AG04449 (cell line): ENCODE measurements at regions of chr2 and their contacts with region 1.

Region 1: DNA sequence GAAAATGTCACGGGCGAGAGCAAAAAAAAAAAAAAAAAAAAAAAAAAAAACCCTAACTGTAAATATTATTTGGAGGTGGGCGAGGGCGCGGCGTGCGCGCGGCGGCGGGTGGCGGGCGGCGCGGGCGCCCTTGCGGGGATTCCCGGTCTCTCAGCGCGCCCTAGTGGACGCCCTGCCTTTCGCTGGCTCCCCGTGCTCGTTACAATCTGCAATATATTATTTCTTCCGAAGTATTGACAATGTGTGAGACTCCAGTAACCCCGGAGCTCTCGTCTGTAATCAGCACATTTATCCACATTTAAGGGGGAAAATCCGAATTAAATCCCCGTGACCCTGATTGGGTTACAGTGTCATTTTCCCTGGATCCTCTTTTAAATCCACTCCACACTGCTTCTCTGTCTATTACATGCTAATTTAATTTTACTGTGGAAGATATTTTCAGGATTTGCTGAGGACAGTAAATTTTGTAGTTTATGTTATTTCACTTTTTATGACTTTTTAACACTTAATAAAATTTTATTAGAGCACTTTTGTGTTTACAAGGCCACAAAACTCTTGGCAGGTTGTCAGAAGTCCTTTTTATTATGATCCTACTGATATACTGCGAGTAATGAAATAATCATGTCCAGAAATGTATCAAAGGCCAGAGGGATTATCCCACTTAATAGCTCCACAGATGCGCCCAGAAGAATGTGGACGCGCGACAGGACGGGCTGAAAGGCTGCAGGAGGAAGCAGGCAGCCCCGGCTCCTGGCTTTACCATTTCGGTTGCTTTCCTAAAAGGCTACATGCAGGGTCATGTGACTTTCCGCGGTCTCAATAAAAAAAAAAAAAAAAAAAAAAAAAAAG is 369.1 kb downstream of the MTX2 start:
- DNase-seq: no peak
- H3K4me3 ChIP-seq: peak overlapping the region; percentile 66
- CTCF ChIP-seq: peak; percentile 67

Region 2: DNA sequence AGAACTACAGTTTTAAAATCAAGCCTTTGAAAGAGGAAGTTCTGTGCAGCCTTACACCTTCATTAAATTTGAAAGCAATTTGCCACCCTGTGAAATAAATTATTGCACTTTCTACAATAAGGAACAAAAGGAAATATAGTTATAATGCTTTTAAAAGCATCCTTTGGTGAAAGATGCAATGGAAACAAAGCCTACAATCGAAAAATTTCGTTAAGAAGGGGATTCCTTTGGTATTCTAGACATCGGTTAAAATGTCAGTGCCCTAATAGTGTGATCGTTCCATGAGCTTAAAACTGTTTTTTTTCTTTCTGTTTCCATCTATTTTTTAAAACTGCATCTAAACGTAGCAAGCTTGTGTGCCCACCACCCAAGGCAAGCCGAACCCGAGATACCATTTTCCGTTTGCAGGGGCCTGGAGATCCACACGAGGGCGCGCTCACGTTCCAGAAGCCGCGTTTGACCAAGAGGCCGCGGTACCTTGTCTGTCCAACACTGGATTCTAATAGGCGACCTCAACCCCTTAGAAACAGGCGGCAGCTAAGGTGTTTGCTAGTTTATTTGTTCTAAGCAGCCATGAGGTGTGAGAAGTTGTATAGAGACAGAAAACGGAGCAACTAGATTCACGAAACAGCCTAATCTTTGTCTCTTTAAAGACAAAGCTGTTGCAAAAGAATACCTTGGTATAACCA is 527.3 kb before region 1 on chr2:
- CTCF ChIA-PET with region 1: interaction called, 20 read pairs
- POLR2A ChIA-PET with region 1: no interaction called
- DNase-seq: no peak
- H3K4me3 ChIP-seq: no peak overlapping the region
- CTCF ChIP-seq: peak; percentile 85

Region 3: GRCh38 chr2:176157499-176158185 is 480.7 kb before region 1 on chr2:
- CTCF ChIA-PET with region 1: interaction called, 10 read pairs
- POLR2A ChIA-PET with region 1: no interaction called
- DNase-seq: no peak
- H3K4me3 ChIP-seq: peak overlapping the region; percentile 57
- CTCF ChIP-seq: no peak

Region 4: GRCh38 chr2:176445956-176446355 is 192.4 kb before region 1 on chr2:
- CTCF ChIA-PET with region 1: interaction called, 16 read pairs
- POLR2A ChIA-PET with region 1: interaction called, 6 read pairs
- DNase-seq: peak; percentile 38
- H3K4me3 ChIP-seq: no peak overlapping the region
- CTCF ChIP-seq: no peak

Region 5: GRCh38 chr2:176565641-176566323 is 72.6 kb before region 1 on chr2:
- CTCF ChIA-PET with region 1: interaction called, 12 read pairs
- POLR2A ChIA-PET with region 1: no interaction called
- DNase-seq: no peak
- H3K4me3 ChIP-seq: no peak overlapping the region
- CTCF ChIP-seq: no peak

Region 6: GRCh38 chr2:176601066-176601465 is 37.3 kb before region 1 on chr2:
- CTCF ChIA-PET with region 1: no interaction called
- POLR2A ChIA-PET with region 1: no interaction called
- DNase-seq: no peak
- H3K4me3 ChIP-seq: no peak overlapping the region
- CTCF ChIP-seq: no peak